Esophagus muscularis mucosa (tissue), 4 donors: ENCODE measurements at regions of chr11 and their contacts with region 1.

Region 1: GRCh38 chr11:77187776-77188632 is 60.0 kb downstream of the MYO7A start:
- DNase-seq: peak; percentile 93
- H3K4me3 ChIP-seq: no peak overlapping the region
- H3K27ac ChIP-seq: no peak overlapping the region
- H3K4me1 ChIP-seq: no peaks in the 10 kb centered on the region
- H3K27me3 ChIP-seq: peaks cover 0 to 16% (median 0%) of the 10 kb centered on the region in 4 donors
- CTCF ChIP-seq: peak; percentile 76 to 85 (median 77)
- EP300 ChIP-seq: no peak
- POLR2A ChIP-seq: no peak

Region 2: GRCh38 chr11:77047007-77047927 is 140.7 kb before region 1 on chr11:
- intact Hi-C with region 1: loop called (anchors 5 kb)
- DNase-seq: no peak
- H3K4me3 ChIP-seq: peak overlapping the region; percentile 39 to 51 (median 45)
- H3K27ac ChIP-seq: peak overlapping the region in 1 of 4 donors; percentile 54
- H3K4me1 ChIP-seq: peaks cover 0 to 13% (median 11%) of the 10 kb centered on the region in 4 donors
- H3K27me3 ChIP-seq: peaks cover 0 to 33% (median 11%) of the 10 kb centered on the region in 4 donors
- CTCF ChIP-seq: peak; percentile 73 to 81 (median 75)
- EP300 ChIP-seq: no peak
- POLR2A ChIP-seq: no peak

Region 3: GRCh38 chr11:77127232-77127911 is 60.6 kb before region 1 on chr11:
- intact Hi-C with region 1: loop called (anchors 2 kb)
- DNase-seq: no peak
- H3K4me3 ChIP-seq: peak overlapping the region; percentile 45 to 58 (median 52)
- H3K27ac ChIP-seq: no peak overlapping the region
- H3K4me1 ChIP-seq: peaks cover 14 to 38% (median 36%) of the 10 kb centered on the region in 4 donors
- H3K27me3 ChIP-seq: peaks cover 0 to 21% (median 0%) of the 10 kb centered on the region in 4 donors
- CTCF ChIP-seq: peak; percentile 92 to 95 (median 94)
- EP300 ChIP-seq: no peak
- POLR2A ChIP-seq: no peak

Region 4: DNA sequence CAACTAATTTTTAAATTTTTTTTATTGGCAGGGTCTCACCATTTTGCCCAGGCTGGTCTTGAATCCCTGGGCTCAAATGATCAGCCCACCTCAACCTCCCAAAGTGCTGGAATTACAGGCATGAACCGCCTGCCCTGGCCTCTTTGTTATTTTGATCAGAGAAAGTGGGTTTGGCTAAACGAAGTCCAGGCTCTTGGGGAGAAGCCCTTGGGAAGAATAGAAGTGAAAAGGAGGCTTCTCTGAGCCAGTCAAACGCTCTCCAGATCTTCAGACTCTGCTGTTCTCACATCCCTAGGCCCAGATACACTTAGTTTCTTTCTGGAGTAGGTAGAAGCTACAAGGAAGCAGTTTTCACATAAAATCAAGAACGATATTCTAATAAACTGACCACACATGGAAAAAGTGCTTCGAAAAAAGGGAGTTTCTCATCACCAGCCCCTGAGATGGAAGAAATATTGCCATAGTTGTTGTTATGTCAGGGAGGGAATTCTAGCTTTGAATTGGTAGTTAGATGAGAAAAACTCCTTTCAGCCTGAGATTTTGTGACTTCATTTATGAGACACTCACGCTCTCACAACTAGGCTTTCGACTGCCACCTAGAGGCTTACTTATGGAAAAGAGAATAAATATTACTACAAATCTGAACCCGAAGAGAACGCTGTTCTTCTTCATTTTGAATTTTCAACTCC is 360.0 kb after region 1 on chr11:
- intact Hi-C with region 1: loop called (anchors 5 kb)
- DNase-seq: no peak
- H3K4me3 ChIP-seq: no peak overlapping the region
- H3K27ac ChIP-seq: no peak overlapping the region
- H3K4me1 ChIP-seq: peaks cover 0 to 8% (median 8%) of the 10 kb centered on the region in 4 donors
- H3K27me3 ChIP-seq: no peaks in the 10 kb centered on the region
- CTCF ChIP-seq: peak; percentile 54 to 68 (median 64)
- EP300 ChIP-seq: no peak
- POLR2A ChIP-seq: no peak